ENCODE measurements at regions of chr9 and their contacts with region 1.

Region 1: GRCh38 chr9:132169672-132170392 is 8.0 kb downstream of the NTNG2 start:
- DNase-seq: peak; percentile 71

Region 2: GRCh38 chr9:132268725-132269352 is 99.0 kb after region 1 on chr9:
- in situ Hi-C with region 1: loop called (anchors 25 kb)
- DNase-seq: peak; percentile 76

Measured in SK-MEL-5 (cell line).